Calu3 (cell line): ENCODE measurements at regions of chr4 and their contacts with region 1.

Region 1: DNA sequence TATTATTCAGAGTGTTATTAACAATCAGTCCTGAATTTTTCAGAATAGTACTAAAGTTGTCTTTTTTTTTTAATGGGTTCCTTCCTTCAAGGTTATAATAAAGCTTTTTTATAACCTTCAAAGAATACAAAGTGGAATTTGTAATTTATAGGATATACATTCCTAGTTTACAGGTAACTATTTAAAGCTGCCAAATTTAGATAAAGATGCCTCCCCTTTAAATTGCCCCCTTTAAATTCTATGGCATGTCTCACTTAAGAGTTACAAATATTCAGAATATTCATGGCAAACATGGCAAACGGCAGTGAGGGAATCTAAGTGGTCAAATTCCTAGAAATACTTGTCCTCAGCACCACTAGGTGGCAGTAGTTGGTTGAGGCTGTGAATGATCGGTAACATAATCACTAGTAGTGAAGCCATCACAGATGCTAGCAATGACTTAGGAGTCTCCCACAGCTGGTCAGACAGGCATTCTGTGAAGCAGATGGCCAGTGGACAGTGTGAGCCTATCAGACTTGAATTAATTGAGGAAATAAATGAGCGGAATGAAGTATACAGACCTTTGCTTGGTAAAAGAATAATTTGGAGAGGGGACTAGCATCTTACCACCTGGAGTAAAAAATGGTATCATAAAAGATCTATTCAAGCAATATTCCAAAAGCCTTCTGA is 86.4 kb downstream of the CBR4 start:
- DNase-seq: peak; percentile 48
- H3K4me3 Mint-ChIP-seq: no peak overlapping the region
- H3K27ac Mint-ChIP-seq: no peak overlapping the region
- H3K4me1 Mint-ChIP-seq: peaks cover 5% of the 10 kb centered on the region
- H3K27me3 Mint-ChIP-seq: no peaks in the 10 kb centered on the region
- CTCF ChIP-seq: peak; percentile 51

Region 2: GRCh38 chr4:168183717-168184608 is 739.7 kb before region 1 on chr4:
- CTCF ChIA-PET with region 1: no interaction called
- intact Hi-C with region 1: loop called (anchors 2 kb)
- DNase-seq: no peak
- H3K4me3 Mint-ChIP-seq: no peak overlapping the region
- H3K27ac Mint-ChIP-seq: peak overlapping the region; percentile 38
- H3K4me1 Mint-ChIP-seq: no peaks in the 10 kb centered on the region
- H3K27me3 Mint-ChIP-seq: no peaks in the 10 kb centered on the region
- CTCF ChIP-seq: peak; percentile 29

Region 3: DNA sequence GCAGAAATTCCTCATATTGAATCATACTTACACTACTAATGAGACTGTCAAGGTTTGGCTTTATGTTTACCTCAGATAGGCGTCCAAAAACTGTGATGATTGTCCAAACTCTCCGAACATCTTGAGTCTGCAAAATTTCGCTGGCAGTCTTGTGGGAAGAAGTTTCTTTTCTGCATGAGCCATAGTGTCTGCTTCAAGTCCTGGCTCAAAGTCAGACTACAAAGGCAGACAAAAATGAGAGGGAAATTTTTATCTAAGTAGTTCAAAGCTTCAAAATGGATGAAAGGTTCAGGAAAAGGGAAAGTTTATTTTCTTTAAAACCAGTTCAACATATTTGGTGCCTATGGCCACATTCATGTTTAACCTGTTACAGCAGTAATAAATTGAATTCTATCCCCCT is 386.1 kb before region 1 on chr4:
- CTCF ChIA-PET with region 1: no interaction called
- intact Hi-C with region 1: no loop called
- DNase-seq: no peak
- H3K4me3 Mint-ChIP-seq: no peak overlapping the region
- H3K27ac Mint-ChIP-seq: no peak overlapping the region
- H3K4me1 Mint-ChIP-seq: no peaks in the 10 kb centered on the region
- H3K27me3 Mint-ChIP-seq: no peaks in the 10 kb centered on the region
- CTCF ChIP-seq: no peak

Region 4: DNA sequence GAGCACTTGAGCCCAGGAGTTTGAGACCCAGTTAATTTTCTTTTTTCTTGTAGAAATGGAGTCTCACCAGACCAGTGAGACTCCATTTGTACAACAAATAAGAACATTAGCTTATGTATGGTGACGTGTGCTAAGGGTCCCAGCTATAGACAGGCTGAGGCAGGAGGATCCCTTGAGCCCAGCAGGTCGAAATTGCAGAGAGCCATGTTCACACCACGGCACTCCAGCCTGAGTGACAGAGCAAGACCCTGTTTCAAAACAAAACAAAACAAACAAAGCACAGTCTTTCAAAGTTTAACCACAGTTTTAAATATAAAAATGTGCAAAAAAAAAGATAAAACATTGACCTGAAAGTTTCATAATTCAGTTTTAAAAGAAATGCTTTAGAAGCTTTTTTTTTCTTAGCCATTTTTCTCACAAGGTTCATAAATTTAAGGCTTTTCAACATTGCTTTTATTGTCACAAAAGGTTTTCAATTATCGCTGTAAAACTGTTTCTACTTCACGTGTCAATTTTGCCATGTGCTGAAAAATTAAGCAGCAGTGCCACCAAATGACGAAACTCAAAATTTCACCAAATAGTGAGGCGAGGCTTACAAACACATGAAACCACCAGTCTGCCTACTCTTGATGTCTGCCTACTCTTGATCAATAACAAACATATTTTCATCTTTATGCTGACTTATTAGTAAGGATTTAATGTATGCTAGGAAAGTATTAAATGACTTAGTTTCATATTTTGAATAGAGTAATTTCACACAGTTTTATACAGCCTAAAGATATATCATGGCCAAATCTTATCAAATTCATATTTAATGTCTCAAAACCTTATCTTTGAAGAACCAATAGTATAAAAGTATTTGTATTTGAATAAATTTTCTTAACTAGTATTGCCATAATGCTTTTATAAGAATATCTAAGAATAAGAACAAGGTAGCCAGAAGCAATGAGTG is 562.4 kb after region 1 on chr4:
- CTCF ChIA-PET with region 1: interaction called, 4 read pairs
- intact Hi-C with region 1: loop called (anchors 2 kb)
- DNase-seq: peak; percentile 50
- H3K4me3 Mint-ChIP-seq: no peak overlapping the region
- H3K27ac Mint-ChIP-seq: no peak overlapping the region
- H3K4me1 Mint-ChIP-seq: no peaks in the 10 kb centered on the region
- H3K27me3 Mint-ChIP-seq: no peaks in the 10 kb centered on the region
- CTCF ChIP-seq: no peak

Region 5: DNA sequence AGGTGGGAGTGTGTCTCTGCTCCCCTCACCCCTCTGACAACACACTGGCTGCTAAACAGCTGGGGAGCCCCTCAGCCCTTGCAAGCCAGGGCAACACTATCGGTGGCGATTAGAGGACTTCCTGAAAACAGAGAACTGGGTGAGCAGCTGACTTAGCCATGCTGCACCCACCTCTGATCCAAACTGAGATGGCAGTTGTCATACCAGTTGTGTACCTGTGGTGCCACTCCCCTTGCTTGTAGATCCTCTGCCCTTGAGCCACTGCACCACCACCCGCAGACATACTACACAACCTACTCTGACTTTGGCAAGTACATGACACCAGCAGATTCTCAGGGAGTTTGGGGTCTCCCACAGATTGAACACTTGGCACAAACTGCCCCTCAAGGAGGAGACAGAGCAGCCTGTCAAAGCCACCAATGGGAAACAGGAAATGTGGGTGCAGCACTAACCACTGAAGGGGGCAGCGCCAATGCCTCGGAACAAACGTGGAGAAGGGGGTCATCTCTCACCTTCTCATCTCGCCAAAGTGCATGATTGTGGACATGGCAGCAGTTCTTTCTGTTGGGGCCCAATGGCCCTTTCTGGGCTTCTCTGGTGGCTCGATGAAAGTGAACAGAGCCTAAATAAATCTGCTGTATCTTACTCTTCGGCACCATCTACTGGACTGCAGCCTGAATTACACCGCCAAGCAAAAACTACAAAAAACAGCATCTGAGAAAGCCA is 568.9 kb after region 1 on chr4:
- CTCF ChIA-PET with region 1: interaction called, 4 read pairs
- intact Hi-C with region 1: loop called (anchors 2 kb)
- DNase-seq: peak; percentile 21
- H3K4me3 Mint-ChIP-seq: no peak overlapping the region
- H3K27ac Mint-ChIP-seq: no peak overlapping the region
- H3K4me1 Mint-ChIP-seq: no peaks in the 10 kb centered on the region
- H3K27me3 Mint-ChIP-seq: no peaks in the 10 kb centered on the region
- CTCF ChIP-seq: peak; percentile 65

Region 6: DNA sequence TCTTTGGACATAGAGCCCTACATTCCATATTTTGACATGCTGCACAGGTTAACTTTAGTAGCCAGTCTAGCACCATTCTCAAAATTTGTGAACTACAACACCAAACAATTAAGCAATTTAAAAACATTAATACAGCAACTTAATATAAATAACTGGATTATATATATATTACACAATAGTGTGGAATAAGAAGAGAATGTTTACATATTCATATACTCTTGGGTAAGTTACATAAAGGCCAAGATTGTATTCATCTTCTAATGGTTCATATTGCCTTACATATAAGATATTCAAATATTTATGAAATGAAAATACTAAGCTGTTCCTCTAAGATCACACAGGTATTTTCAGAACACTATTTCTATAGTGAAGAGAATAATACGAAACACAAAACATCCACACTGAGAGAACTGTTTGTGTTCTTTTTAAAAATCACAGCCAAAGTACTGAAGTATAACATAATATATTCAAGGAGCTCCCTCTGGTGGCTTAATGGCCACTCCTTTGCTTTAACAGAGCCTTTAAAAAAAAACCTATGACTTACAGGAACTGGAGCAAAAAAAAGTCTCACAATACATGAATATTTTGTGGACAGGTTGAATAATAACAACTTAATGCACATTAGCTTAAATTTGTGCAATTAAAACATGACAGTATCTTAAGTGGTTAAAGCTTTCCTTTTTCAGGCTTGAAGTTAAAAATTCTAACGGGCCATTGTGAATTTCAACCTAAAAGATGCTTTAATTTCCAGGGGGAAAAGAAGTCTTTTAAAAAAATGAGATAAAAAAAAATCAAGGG is 642.6 kb after region 1 on chr4:
- CTCF ChIA-PET with region 1: no interaction called
- intact Hi-C with region 1: loop called (anchors 5 kb)
- DNase-seq: peak; percentile 25
- H3K4me3 Mint-ChIP-seq: no peak overlapping the region
- H3K27ac Mint-ChIP-seq: no peak overlapping the region
- H3K4me1 Mint-ChIP-seq: no peaks in the 10 kb centered on the region
- H3K27me3 Mint-ChIP-seq: no peaks in the 10 kb centered on the region
- CTCF ChIP-seq: peak; percentile 23